ENCODE measurements at regions of chr12 and their contacts with region 1.

Region 1: GRCh38 chr12:6851921-6852650 is at the start of gene USP5:
- DNase-seq: peak; percentile 99 to 100 (median 99)
- H3K4me3 ChIP-seq: peak within 1 kb of the TSS; percentile 62 to 97
- H3K4me3 Mint-ChIP-seq: peak within 1 kb of the TSS; percentile 88 to 99 (median 95)
- H3K27ac ChIP-seq: peak within 1 kb of the TSS; percentile 92
- H3K27ac Mint-ChIP-seq: peak within 1 kb of the TSS; percentile 82 to 100 (median 99)
- H3K4me1 ChIP-seq: peaks cover 37% of the 10 kb centered on the region
- H3K4me1 Mint-ChIP-seq: peaks cover 18 to 36% (median 27%) of the 10 kb centered on the region in 4 donors
- H3K27me3 ChIP-seq: no peaks in the 10 kb centered on the region
- H3K27me3 Mint-ChIP-seq: no peaks in the 10 kb centered on the region
- total RNA-seq, gene USP5: 65.2 to 69.3 TPM

Region 2: GRCh38 chr12:6493497-6494257 is 358.4 kb before region 1 on chr12 and contains the start of gene NCAPD2:
- CTCF ChIA-PET with region 1: no interaction called
- POLR2A ChIA-PET with region 1: interaction called, 3 read pairs
- intact Hi-C with region 1: loop called (anchors 1 kb)
- DNase-seq: peak; percentile 96 to 97 (median 96)
- H3K4me3 ChIP-seq: peak within 1 kb of the TSS; percentile 98 to 99
- H3K4me3 Mint-ChIP-seq: peak within 1 kb of the TSS; percentile 89 to 98 (median 96)
- H3K27ac ChIP-seq: peak within 1 kb of the TSS; percentile 87
- H3K27ac Mint-ChIP-seq: peak within 1 kb of the TSS; percentile 90 to 99 (median 97)
- H3K4me1 ChIP-seq: peaks cover 37% of the 10 kb centered on the region
- H3K4me1 Mint-ChIP-seq: peaks cover 26 to 46% (median 35%) of the 10 kb centered on the region in 4 donors
- H3K27me3 ChIP-seq: no peaks in the 10 kb centered on the region
- H3K27me3 Mint-ChIP-seq: no peaks in the 10 kb centered on the region
- total RNA-seq, gene NCAPD2: 38.1 to 39.8 TPM

Region 3: DNA sequence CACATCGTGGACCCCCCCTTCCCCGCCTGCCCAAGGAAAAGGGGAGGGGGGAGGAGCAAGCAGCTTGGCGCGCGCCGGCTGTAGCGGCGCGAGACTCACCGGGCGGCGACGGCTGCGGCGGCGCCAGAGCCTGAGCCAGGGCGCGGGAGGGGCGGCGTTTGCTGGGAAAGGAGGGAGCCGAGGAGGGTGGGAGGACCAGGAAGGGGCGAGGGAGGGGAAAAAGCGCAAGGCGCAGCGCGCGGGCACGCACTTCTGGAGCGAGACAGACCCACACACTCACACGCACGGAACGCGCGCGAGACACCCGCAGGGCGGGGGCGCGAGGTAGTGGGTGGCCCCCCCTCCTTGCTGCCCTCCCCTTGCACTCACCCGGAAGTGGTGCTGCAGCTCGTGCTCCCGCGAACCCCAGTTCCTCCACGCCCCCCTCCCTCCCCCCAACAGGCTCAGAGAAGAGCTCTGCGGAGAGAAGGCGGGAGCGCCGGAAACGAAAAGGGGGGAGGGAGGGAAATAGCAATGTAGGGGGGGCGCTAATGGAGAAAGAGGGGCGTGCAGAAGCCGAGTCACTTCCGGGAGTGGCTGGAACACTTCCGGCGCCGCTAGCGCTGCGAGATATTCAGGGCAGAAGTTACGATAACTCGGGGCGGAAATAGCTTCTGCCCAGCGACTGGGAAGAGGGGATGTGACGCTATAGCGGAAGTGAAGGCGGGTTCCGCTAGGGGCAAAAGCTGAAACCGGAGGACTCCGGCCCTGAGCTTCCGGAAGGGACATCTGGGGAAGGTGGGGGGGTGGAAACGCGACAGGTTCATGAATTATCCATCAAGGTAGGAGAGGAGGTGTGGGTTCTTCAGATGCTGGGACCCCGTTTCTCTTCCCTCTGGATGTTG is 162.8 kb before region 1 on chr12 and contains the start of gene ZNF384:
- CTCF ChIA-PET with region 1: no interaction called
- POLR2A ChIA-PET with region 1: interaction called, 37 read pairs
- intact Hi-C with region 1: loop called (anchors 1 kb)
- DNase-seq: peak; percentile 93 to 98 (median 97)
- H3K4me3 ChIP-seq: peak within 1 kb of the TSS; percentile 59 to 83
- H3K4me3 Mint-ChIP-seq: peak within 1 kb of the TSS; percentile 92 to 98 (median 96)
- H3K27ac ChIP-seq: peak within 1 kb of the TSS; percentile 93
- H3K27ac Mint-ChIP-seq: peak within 1 kb of the TSS; percentile 92 to 100 (median 99)
- H3K4me1 ChIP-seq: peaks cover 58% of the 10 kb centered on the region
- H3K4me1 Mint-ChIP-seq: peaks cover 40 to 59% (median 46%) of the 10 kb centered on the region in 4 donors
- H3K27me3 ChIP-seq: no peaks in the 10 kb centered on the region
- H3K27me3 Mint-ChIP-seq: no peaks in the 10 kb centered on the region
- total RNA-seq, gene ZNF384: 88.6 to 88.7 TPM

Region 4: DNA sequence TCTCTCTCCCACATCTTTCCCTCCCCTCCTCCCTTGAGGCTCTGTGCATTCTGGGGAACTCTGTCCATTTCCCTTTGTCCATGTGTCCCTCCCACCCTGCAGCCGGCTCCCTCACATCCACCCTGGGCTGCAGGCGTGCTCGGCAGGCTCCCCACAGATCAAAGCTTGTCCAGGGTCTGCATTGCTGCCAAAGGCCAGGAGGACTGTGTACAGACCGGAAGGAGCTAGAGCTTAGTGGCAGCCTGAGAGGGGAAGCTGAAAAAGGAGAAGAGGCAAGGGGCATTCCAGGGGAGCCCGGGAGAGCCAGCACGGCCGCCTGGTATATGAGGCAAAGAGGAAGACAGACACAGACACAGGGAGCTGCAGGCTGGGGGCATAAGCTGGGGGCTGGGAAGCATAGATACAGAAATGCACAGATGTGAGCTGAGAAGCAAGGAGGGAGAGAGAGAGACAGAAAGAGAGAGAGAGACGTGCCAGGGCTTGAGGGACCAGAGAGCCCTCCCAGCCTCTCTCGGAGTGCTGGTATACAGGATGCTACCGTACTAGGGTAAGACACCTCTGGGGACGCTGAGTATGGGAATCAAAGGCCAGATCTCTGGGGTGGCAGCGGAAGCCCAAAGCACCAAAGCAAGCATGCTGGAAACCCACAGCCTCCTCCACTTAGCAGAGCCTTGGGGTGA is 59.4 kb before region 1 on chr12:
- CTCF ChIA-PET with region 1: interaction called, 4 read pairs
- POLR2A ChIA-PET with region 1: interaction called, 17 read pairs
- intact Hi-C with region 1: no loop called
- DNase-seq: peak; percentile 59 to 73 (median 66)
- H3K4me3 ChIP-seq: peak overlapping the region; percentile 79
- H3K4me3 Mint-ChIP-seq: peak overlapping the region; percentile 95 to 99 (median 98)
- H3K27ac ChIP-seq: peak overlapping the region; percentile 83
- H3K27ac Mint-ChIP-seq: peak overlapping the region; percentile 90 to 99 (median 98)
- H3K4me1 ChIP-seq: peaks cover 55% of the 10 kb centered on the region
- H3K4me1 Mint-ChIP-seq: peaks cover 50 to 92% (median 66%) of the 10 kb centered on the region in 4 donors
- H3K27me3 ChIP-seq: no peaks in the 10 kb centered on the region
- H3K27me3 Mint-ChIP-seq: no peaks in the 10 kb centered on the region

Region 5: GRCh38 chr12:6873094-6874014 is 21.3 kb after region 1 on chr12 and contains the start of gene SPSB2:
- CTCF ChIA-PET with region 1: interaction called, 102 read pairs
- POLR2A ChIA-PET with region 1: interaction called, 270 read pairs
- intact Hi-C with region 1: loop called (anchors 1 kb)
- DNase-seq: peak; percentile 97 to 98 (median 98)
- H3K4me3 ChIP-seq: peak within 1 kb of the TSS; percentile 93 to 99
- H3K4me3 Mint-ChIP-seq: peak within 1 kb of the TSS; percentile 90 to 93 (median 92)
- H3K27ac ChIP-seq: peak within 1 kb of the TSS; percentile 87
- H3K27ac Mint-ChIP-seq: peak within 1 kb of the TSS; percentile 90 to 96 (median 93)
- H3K4me1 ChIP-seq: peaks cover 45% of the 10 kb centered on the region
- H3K4me1 Mint-ChIP-seq: peaks cover 32 to 66% (median 49%) of the 10 kb centered on the region in 4 donors
- H3K27me3 ChIP-seq: no peaks in the 10 kb centered on the region
- H3K27me3 Mint-ChIP-seq: no peaks in the 10 kb centered on the region
- total RNA-seq, gene SPSB2: 19.8 to 21.9 TPM

Region 6: DNA sequence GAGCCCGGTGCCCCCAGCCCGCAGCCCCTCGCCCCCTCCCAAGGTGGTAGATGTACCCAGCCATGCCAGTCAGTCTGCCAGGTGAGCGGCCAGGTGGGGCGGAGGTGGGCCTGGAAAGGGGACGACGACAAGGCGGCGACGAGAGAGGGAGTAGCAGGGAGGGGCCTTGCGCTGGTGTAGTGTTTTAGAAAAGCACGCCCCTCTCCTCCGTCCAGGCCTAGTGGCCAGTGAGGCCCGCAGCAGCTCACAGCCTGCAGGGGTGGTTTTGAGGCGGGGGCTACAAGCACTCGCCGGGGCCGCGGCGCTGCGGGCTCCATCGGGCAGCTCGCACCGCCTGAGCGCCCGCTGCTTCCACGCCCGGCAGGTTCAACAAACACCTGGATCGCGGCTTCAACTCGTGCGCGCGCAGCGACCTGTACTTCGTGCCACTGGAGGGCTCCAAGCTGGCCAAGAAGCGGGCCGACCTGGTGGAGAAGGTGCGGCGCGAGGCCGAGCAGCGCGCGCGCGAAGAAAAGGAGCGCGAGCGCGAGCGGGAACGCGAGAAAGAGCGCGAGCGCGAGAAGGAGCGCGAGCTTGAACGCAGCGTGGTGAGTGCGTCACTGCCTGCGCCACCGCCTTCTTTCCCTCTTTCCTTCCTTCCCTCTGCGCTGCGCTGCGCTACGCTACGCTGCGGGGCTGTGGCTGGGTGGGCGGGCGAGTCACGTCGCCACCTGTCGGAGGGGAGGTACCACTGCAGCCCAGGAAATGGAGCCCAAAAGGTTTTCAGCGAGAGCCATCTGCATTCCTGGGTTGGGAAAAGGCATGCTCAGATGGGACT is 85.6 kb after region 1 on chr12:
- CTCF ChIA-PET with region 1: interaction called, 5 read pairs
- POLR2A ChIA-PET with region 1: interaction called, 28 read pairs
- intact Hi-C with region 1: no loop called
- DNase-seq: peak; percentile 92 to 96 (median 95)
- H3K4me3 ChIP-seq: peak overlapping the region; percentile 47 to 82
- H3K4me3 Mint-ChIP-seq: peak overlapping the region; percentile 80 to 88 (median 84)
- H3K27ac ChIP-seq: peak overlapping the region; percentile 95
- H3K27ac Mint-ChIP-seq: peak overlapping the region; percentile 93 to 99 (median 94)
- H3K4me1 ChIP-seq: peaks cover 29% of the 10 kb centered on the region
- H3K4me1 Mint-ChIP-seq: peaks cover 20 to 48% (median 35%) of the 10 kb centered on the region in 4 donors
- H3K27me3 ChIP-seq: no peaks in the 10 kb centered on the region
- H3K27me3 Mint-ChIP-seq: no peaks in the 10 kb centered on the region

Region 7: GRCh38 chr12:7108796-7109571 is 256.9 kb after region 1 on chr12 and contains the start of gene C1RL:
- CTCF ChIA-PET with region 1: interaction called, 4 read pairs
- POLR2A ChIA-PET with region 1: interaction called, 12 read pairs
- intact Hi-C with region 1: no loop called
- DNase-seq: peak; percentile 63 to 73 (median 69)
- H3K4me3 ChIP-seq: peak within 1 kb of the TSS; percentile 54 to 94
- H3K4me3 Mint-ChIP-seq: peak within 1 kb of the TSS; percentile 93 to 96 (median 94)
- H3K27ac ChIP-seq: peak within 1 kb of the TSS; percentile 74
- H3K27ac Mint-ChIP-seq: peak within 1 kb of the TSS; percentile 91 to 97 (median 95)
- H3K4me1 ChIP-seq: peaks cover 38% of the 10 kb centered on the region
- H3K4me1 Mint-ChIP-seq: peaks cover 22 to 53% (median 40%) of the 10 kb centered on the region in 4 donors
- H3K27me3 ChIP-seq: no peaks in the 10 kb centered on the region
- H3K27me3 Mint-ChIP-seq: no peaks in the 10 kb centered on the region
- total RNA-seq, gene C1RL: 30.7 to 33.6 TPM